ENCODE measurements at regions of chr14 and their contacts with region 1.

Region 1: DNA sequence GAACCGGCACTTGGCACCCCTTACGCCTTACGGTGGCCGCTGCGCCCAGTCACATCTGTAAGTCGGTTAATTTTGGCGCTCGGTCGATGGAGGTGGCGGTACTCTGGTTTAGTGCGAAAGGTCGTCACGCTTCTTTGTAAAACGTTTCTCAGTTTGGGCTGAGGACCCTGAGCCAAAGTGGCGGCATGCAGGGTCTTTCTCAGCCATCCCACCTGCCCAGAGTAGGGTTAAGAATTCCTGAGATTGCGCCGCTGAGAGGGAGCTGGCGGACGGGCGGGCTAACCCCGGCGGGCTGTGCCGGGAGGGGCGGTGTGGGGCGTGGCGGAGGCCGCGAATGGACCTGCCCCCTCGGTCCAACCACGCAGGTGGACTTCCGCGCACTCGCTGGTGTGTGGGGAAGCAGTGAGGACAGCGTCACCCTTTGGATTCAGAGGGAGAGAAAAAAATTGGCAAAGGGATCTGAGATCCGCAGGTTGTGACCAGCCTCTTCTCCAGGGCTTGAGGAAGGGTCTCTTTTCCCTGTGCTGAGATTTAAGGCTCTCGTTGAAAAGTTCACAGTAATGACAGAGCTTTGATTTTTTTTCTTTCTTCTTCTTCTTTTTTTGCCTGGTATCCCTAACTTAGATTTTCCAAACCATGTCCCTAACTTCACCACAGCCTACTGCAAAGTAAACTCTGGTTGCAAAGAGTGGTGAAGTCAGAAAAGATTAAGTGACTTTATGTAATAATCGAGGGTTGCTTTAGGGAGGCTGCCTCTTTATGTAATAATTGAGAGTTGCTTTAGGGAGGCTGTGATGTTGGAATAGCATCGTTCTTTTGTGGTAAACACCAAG is 602 bp upstream of the FBXO33 start:
- DNase-seq: peak; percentile 37
- H3K4me3 ChIP-seq: peak overlapping the region; percentile 60
- H3K27me3 ChIP-seq: no peaks in the 10 kb centered on the region
- CTCF ChIP-seq: peak; percentile 1; the same call in 1 of the 2 replicates

Region 2: GRCh38 chr14:39185256-39186049 is 247.4 kb before region 1 on chr14:
- CTCF ChIA-PET with region 1: no interaction called
- POLR2A ChIA-PET with region 1: interaction called, 10 read pairs
- DNase-seq: no peak
- H3K4me3 ChIP-seq: no peak overlapping the region
- H3K27me3 ChIP-seq: no peaks in the 10 kb centered on the region
- CTCF ChIP-seq: no peak

Region 3: DNA sequence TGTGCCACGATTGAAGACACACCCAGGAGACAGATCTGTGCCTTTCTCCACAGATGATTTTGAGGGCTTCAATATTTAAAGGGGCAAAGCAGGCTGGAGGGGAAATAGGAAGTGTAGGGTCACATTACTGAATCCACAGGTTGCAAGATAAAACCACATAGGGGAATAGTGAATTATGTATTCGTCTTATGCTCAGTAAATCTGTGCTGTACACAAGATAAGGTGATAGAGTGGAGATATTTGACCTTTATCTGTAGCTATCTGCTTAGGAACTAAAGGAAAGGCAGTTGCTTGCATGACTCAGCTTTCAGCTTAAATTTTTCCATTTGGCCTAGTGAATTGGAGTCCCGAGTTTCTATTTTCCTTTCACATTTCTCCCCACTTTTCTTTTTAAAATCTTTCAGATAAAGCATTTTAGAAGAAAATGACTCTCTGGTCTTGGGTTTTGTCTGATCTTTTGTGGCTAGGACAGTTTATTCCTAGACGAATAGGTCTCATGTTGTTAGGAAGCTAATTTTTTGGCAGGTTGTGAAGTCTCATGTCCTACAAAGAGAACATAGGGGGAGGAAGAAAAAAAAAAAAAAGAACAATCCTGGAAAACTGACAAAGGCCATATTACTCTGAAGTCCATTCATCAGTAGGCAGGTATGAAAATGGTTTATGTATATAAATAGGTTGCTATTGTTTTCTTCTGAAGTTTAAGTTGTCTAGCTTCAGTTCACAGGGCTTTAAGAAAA is 56.0 kb before region 1 on chr14:
- CTCF ChIA-PET with region 1: interaction called, 10 read pairs
- POLR2A ChIA-PET with region 1: interaction called, 3 read pairs
- DNase-seq: no peak
- H3K4me3 ChIP-seq: no peak overlapping the region
- H3K27me3 ChIP-seq: no peaks in the 10 kb centered on the region
- CTCF ChIP-seq: no peak

Region 4: DNA sequence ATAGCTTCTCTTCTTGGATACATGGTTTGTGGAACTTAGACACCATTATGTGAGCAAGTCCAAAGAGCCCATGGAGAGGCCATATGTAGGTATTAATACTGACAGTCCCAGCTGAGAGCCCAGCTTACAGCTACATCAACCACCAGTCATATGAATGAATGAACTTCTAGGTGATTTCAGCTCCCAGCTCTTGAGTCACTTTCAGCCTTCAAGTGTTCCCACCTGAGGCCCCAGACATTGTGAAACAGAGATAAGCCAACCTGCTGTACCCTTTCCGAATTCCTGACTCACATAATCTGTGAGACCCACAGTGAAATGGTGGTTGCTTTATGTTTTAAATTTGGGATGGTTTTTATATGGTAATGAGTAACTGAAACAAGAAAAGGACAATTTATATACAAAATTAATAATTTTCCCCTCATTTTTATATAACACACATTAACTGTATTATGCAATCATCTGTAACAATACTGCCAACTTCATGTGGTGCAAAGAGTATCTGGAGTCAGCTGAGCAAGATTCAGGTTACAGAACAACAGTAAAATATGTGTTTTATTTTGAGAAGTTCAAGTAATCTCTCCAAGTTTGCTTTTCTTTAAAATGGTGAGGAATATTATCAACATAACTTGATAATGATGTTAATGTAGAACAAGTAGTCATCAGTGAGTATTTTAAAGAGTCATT is 27.1 kb after region 1 on chr14:
- CTCF ChIA-PET with region 1: no interaction called
- POLR2A ChIA-PET with region 1: no interaction called
- DNase-seq: no peak
- H3K4me3 ChIP-seq: no peak overlapping the region
- H3K27me3 ChIP-seq: no peaks in the 10 kb centered on the region
- CTCF ChIP-seq: no peak

Region 5: DNA sequence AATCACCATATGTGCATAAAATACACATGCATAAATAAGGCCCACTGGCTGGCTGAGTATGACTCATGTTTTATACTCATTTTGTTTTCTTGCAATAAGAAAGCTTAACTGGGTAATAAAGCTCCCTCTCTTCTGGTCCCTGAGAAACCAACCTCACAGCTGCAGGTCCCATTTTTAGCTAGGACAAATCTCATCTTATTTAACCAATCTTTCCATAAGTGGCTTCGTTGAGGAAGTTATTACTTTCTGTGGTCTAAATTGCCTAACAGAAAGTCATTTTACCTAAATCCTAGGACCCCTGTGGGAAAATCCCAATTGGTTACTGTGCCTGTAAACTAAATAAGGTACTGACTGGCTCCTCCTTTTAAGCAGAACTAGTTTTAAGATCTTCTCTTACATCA is 232.2 kb after region 1 on chr14:
- CTCF ChIA-PET with region 1: no interaction called
- POLR2A ChIA-PET with region 1: no interaction called
- DNase-seq: no peak
- H3K4me3 ChIP-seq: no peak overlapping the region
- H3K27me3 ChIP-seq: no peaks in the 10 kb centered on the region
- CTCF ChIP-seq: no peak